Prostate gland (tissue), 2 donors: ENCODE measurements at regions of chr4 and their contacts with region 1.

Region 1: GRCh38 chr4:64158648-64159326 is 250.5 kb downstream of the TECRL start:
- DNase-seq: peak; percentile 63
- H3K4me3 ChIP-seq: no peak overlapping the region
- H3K27ac ChIP-seq: no peak overlapping the region
- H3K4me1 ChIP-seq: no peaks in the 10 kb centered on the region
- H3K27me3 ChIP-seq: no peaks in the 10 kb centered on the region
- CTCF ChIP-seq: peak; percentile 27 to 79 (median 68)
- POLR2A ChIP-seq: no peak

Region 2: DNA sequence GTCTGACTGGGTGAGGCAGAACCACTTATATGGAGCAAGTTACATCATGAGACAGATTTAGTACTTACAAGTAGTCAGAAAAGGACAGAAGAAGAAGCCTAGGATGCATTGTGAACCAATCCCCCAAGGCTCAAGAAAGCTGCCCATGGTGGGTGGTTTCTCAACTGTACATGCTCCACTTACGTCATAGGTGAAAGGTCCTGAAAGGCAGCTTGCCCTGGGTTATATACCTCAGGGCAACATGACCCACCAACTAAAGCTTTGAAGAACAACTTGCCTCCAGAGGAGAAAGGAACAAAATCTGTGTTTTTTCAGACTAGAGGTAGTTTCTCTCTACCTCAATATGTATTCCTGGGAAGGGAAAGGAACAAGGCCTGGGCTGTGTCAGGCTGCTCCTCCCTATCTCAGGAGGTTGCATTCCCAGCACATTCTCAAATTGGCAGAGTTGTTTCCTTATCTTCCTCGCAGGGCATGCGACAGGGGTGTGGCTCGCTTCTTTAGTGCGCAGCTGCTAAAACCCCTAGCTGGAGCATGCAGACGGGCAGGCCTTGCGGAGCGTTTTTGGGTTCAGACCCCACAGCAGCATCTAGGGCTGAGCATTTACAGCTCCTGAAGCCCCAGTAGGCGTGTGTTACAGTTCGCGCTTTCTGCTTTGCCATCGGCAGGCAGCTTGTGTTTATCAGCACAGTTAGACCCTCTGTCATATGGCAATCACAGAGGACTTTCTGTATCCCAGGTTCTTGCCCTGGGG is 142.1 kb before region 1 on chr4:
- intact Hi-C with region 1: no loop called
- DNase-seq: no peak
- H3K4me3 ChIP-seq: no peak overlapping the region
- H3K27ac ChIP-seq: no peak overlapping the region
- H3K4me1 ChIP-seq: no peaks in the 10 kb centered on the region
- H3K27me3 ChIP-seq: no peaks in the 10 kb centered on the region
- CTCF ChIP-seq: no peak
- POLR2A ChIP-seq: no peak

Region 3: DNA sequence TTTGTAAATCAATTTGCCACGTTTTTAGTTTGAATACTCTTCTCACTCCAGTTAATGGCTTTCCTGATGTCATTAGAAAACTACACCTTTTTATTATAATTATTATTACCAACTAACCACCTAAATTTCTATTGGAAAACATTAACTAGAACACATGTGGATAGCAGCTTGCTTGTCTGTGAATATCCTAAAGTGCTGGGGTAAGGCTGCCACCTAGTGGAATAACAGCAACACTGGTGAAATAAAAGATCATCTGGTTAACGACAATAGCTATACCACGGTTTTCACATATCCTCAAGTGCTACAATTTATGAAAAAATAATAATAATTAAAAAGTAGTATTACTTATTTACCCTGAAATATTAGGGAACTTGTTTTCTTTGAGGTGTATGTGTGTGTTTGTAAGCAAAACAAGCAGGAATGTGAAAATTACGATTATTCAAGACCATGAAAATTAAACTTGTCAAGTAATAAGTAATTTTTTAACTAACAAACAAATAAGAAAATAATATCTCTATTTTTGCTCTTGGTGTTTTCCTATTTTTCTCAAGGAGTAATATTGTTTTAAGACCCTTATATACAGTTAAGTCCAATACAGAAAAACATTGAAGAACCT is 380.6 kb after region 1 on chr4:
- intact Hi-C with region 1: loop called (anchors 2 kb)
- DNase-seq: peak; percentile 49
- H3K4me3 ChIP-seq: no peak overlapping the region
- H3K27ac ChIP-seq: no peak overlapping the region
- H3K4me1 ChIP-seq: no peaks in the 10 kb centered on the region
- H3K27me3 ChIP-seq: no peaks in the 10 kb centered on the region
- CTCF ChIP-seq: peak; percentile 39 to 79 (median 72)
- POLR2A ChIP-seq: no peak